Cardiac septum (tissue), 1 donor: ENCODE measurements at regions of chr6 and their contacts with region 1.

Region 1: GRCh38 chr6:134063966-134064445 is 11.6 kb upstream of the SLC2A12 start:
- DNase-seq: no peak

Region 2: GRCh38 chr6:133923938-133924593 is 139.9 kb before region 1 on chr6:
- intact Hi-C with region 1: loop called (anchors 1 kb)
- DNase-seq: no peak

Region 3: GRCh38 chr6:133973109-133973971 is 90.7 kb before region 1 on chr6:
- intact Hi-C with region 1: loop called (anchors 2 kb)
- DNase-seq: no peak